Adrenal gland (tissue), 19 donors: ENCODE measurements at regions of chr13 and their contacts with region 1.

Region 1: GRCh38 chr13:49464621-49465325 is 20.7 kb downstream of the SETDB2 start:
- DNase-seq: no peak
- H3K4me3 ChIP-seq: no peak overlapping the region
- H3K27ac ChIP-seq: no peak overlapping the region
- H3K4me1 ChIP-seq: no peaks in the 10 kb centered on the region
- H3K27me3 ChIP-seq: no peaks in the 10 kb centered on the region
- CTCF ChIP-seq: no peak
- POLR2A ChIP-seq: no peak

Region 2: DNA sequence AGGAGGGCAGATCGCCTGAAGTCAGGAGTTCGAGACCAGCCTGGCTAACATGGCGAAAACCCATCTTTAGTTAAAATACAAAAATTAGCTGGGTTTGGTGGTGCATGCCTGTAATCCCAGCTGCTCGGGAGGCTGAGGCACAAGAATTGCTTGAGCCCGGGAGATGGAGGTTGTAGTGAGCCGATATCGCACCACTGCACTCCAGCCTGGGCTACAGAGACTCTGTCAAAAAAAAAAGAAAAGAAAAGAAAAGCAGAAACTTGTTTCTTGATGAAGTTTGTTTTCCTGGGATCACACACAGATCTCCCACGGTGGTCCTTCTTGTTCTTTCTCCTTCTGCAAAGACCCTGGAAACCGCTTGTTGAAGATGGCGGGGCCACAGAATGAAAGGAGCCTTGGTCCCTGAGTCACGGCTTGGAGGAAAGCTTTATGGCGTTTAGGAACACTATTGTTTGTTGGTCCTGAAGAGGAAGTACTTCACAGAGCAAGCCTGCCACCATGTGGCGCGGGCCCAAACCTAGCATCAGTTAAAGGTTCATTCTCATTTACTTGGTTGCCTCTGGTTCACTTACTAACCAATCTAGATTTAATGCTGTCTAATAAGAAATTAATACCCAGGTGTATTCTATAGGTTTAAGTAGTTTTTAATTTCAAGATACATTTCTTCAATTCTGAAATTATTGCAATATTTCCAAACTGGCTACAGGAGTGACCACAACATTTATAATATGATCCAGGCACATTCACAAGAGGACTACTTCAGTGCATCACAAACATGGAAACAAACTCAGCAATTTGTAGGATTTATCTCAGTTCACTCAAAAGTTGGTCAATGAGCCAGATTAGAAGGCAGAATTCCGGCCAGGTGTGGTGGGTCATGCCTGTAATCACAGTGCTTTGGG is 142.2 kb after region 1 on chr13:
- intact Hi-C with region 1: loop called in 1 of 2 experiments (anchors 10 kb)
- DNase-seq: peak; percentile 84 to 96 (median 91)
- H3K4me3 ChIP-seq: peak overlapping the region in 2 of 4 donors; percentile 17 to 40
- H3K27ac ChIP-seq: peak overlapping the region in 1 of 5 donors; percentile 31
- H3K4me1 ChIP-seq: peaks cover 3 to 5% of the 10 kb centered on the region in 2 donors
- H3K27me3 ChIP-seq: no peaks in the 10 kb centered on the region
- CTCF ChIP-seq: peak; percentile 68 to 92 (median 84)
- POLR2A ChIP-seq: no peak